Stomach (tissue), 19 donors: ENCODE measurements at regions of chr4 and their contacts with region 1.

Region 1: DNA sequence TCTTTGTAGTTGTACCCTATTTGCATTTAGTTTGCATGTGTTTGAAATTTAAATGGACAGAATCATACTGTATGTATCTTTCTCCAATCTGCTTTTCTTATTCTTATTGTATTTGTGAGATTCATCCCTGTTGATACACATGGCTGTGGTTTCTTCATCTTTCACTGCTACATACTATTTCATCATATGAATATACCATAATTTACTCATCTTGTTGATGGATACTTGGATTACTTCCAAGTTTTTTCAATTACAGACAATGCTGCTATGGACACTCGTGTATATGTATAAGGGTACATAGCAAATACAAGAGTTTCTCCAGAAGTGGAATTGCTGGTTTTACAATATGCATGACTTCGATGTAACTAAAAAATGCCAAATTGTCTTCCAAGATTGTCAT is 11.8 kb upstream of the KLHL8 start:
- DNase-seq: no peak
- H3K4me3 ChIP-seq: no peak overlapping the region
- H3K27ac ChIP-seq: no peak overlapping the region
- H3K4me1 ChIP-seq: peaks cover 3 to 8% (median 4%) of the 10 kb centered on the region in 4 donors
- H3K27me3 ChIP-seq: no peaks in the 10 kb centered on the region
- CTCF ChIP-seq: no peak
- EP300 ChIP-seq: no peak
- POLR2A ChIP-seq: no peak

Region 2: GRCh38 chr4:87147116-87147515 is 85.1 kb before region 1 on chr4:
- intact Hi-C with region 1: loop called (anchors 5 kb)
- DNase-seq: no peak
- H3K4me3 ChIP-seq: no peak overlapping the region
- H3K27ac ChIP-seq: no peak overlapping the region
- H3K4me1 ChIP-seq: peaks cover 0 to 6% (median 2%) of the 10 kb centered on the region in 4 donors
- H3K27me3 ChIP-seq: no peaks in the 10 kb centered on the region
- CTCF ChIP-seq: no peak
- EP300 ChIP-seq: no peak
- POLR2A ChIP-seq: no peak